PC-9 (cell line): ENCODE measurements at regions of chr19 and their contacts with region 1.

Region 1: DNA sequence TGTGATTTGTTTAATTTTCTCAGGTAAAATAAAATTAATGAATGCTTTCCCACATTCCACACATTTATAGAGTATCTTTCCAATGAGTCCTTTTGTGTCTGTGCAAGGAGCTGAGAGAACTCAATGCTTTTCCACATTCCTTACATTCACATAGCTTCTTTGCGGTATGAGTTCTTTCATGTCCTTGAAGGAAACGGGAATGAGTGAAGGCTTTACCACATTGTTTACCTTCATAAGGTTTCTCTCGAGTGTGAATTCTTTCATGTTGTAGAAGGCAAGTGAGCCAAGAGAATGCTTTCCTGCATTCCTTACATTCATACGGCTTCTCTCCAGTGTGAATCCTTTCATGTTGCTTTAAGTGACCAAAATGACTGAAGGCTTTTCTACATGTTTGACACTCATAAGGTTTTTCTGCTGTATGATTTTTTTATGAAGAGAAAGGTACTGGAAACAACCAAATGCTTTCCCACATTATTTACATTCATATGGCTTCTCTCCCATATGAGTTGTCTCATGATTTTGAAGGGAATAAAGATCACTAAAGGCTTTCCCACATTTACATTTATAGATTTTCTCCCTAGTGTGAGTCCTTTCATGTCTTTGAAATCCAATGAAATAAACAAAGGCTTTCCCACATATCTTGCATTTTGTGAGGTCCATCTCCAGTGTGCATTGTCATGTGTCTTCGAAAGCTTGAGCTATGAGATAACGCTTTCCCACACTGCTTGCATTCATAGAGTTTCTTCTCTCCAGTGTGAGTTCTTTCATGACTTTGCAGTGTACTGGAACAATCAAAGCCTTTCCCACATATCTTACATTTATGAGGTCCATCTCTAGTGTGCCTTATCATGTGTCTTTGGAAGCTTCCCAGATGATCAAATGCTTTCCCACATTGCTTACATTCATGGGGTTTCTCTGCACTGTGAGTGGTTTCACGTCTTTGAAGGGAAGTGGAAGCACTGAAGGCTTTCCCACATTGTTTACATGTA is 14.6 kb upstream of the ZNF442 start:
- DNase-seq: no peak
- H3K4me3 ChIP-seq: no peak overlapping the region
- H3K27ac ChIP-seq: no peak overlapping the region
- H3K4me1 ChIP-seq: no peaks in the 10 kb centered on the region
- H3K27me3 ChIP-seq: no peaks in the 10 kb centered on the region
- CTCF ChIP-seq: no peak

Region 2: GRCh38 chr19:12155324-12155860 is 224.7 kb before region 1 on chr19:
- CTCF ChIA-PET with region 1: no interaction called
- POLR2A ChIA-PET with region 1: no interaction called
- intact Hi-C with region 1: no loop called
- DNase-seq: no peak
- H3K4me3 ChIP-seq: peak overlapping the region; percentile 63
- H3K27ac ChIP-seq: no peak overlapping the region
- H3K4me1 ChIP-seq: peaks cover 5% of the 10 kb centered on the region; the same call in 1 of the 2 replicates
- H3K27me3 ChIP-seq: no peaks in the 10 kb centered on the region
- CTCF ChIP-seq: no peak

Region 3: GRCh38 chr19:12623361-12624022 is 243.4 kb after region 1 on chr19:
- CTCF ChIA-PET with region 1: no interaction called
- POLR2A ChIA-PET with region 1: interaction called, 37 read pairs
- intact Hi-C with region 1: no loop called
- DNase-seq: no peak
- H3K4me3 ChIP-seq: no peak overlapping the region
- H3K27ac ChIP-seq: no peak overlapping the region
- H3K4me1 ChIP-seq: no peaks in the 10 kb centered on the region
- H3K27me3 ChIP-seq: no peaks in the 10 kb centered on the region
- CTCF ChIP-seq: no peak